GM12878 (cell line): ENCODE measurements at regions of chr22 and their contacts with region 1.

Region 1: DNA sequence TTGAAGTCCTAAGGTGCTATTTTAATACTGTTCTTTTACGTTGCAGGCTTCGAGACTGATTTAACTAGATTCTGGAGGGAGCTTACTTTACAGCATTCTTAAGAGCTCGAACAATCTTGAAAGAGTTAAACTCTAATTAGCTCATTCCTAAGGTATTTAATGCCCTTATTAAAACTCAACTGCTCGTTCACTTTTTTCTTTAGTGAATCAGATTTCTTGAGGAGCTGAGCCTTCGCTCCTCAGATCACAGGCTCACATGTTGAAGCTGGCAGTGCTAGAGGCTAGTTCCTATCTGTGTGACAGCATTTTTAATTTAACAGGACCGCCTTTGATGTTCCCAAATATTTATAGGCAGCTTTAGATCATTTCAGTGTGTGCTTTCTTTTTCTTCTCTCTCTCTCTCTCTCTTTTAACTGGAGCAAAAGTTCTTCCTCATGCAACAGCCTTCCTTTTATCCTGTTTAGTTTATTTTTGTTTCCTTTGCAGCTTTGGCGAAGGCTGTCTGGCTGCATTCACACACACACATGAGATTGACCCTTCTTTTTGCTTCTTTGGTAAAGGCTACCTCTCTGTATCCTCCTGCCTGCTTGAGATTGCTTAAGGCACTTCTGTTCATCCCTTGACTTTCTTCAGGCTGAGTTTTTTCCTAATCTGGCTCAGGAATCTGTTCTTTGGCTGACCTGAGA is 21.0 kb downstream of the ZNRF3 start:
- DNase-seq: no peak
- ATAC-seq: no peak
- H3K4me3 ChIP-seq: no peak overlapping the region
- H3K27ac ChIP-seq: no peak overlapping the region
- H3K4me1 ChIP-seq: peaks cover 23% of the 10 kb centered on the region
- H3K27me3 ChIP-seq: no peaks in the 10 kb centered on the region; a peak in 1 of 4 replicates
- CTCF ChIP-seq: no peak
- EP300 ChIP-seq: no peak
- POLR2A ChIP-seq: no peak
- RAD21 ChIP-seq: no peak

Region 2: DNA sequence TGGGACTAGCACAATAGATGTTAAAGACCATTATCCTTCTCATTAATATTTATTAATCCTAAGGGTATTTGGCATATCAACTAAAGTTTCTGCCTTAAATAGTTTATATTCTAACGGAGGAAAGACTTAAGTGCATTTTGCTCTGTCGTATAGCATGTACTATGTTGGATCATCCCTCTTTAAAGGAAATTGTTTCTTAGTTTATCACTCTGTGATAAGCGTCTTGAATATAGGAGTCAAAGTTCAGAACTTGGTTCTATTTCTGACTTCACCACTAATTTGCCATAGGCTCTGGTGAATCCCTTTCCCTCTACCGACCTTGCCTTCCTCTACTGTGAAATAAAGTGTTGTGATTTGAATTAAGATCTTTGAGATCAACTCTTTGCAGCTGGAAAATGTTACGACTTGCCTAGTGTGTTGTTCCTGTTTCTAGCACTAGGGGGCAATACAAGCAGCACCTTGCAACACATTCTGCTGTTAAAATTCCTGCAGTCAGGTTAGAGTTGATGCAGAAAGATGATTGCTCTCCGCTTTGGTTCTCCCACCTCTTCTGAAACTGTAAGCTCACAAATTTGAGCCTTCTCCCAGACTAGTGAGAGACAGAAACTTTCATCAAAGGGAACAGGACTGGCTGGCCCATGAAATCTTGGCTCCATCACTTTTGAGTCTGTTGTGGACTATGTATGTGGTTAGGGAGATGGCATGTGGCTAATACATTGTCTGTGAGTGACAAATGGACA is 48.8 kb before region 1 on chr22:
- CTCF ChIA-PET with region 1: interaction called, 12 read pairs
- POLR2A ChIA-PET with region 1: no interaction called
- RAD21 ChIA-PET with region 1: interaction called, 3 read pairs
- SMC1A ChIA-PET with region 1: interaction called, 7 read pairs
- in situ Hi-C with region 1: no loop called
- intact Hi-C with region 1: loop called (anchors 5 kb)
- DNase-seq: peak; percentile 27
- ATAC-seq: peak; percentile 79
- H3K4me3 ChIP-seq: no peak overlapping the region
- H3K27ac ChIP-seq: no peak overlapping the region
- H3K4me1 ChIP-seq: no peaks in the 10 kb centered on the region
- H3K27me3 ChIP-seq: no peaks in the 10 kb centered on the region; a peak in 1 of 4 replicates
- CTCF ChIP-seq: peak; percentile 85 to 90 (median 87); a peak in 5 of 6 replicates
- EP300 ChIP-seq: no peak
- POLR2A ChIP-seq: no peak
- RAD21 ChIP-seq: peak; percentile 94

Region 3: DNA sequence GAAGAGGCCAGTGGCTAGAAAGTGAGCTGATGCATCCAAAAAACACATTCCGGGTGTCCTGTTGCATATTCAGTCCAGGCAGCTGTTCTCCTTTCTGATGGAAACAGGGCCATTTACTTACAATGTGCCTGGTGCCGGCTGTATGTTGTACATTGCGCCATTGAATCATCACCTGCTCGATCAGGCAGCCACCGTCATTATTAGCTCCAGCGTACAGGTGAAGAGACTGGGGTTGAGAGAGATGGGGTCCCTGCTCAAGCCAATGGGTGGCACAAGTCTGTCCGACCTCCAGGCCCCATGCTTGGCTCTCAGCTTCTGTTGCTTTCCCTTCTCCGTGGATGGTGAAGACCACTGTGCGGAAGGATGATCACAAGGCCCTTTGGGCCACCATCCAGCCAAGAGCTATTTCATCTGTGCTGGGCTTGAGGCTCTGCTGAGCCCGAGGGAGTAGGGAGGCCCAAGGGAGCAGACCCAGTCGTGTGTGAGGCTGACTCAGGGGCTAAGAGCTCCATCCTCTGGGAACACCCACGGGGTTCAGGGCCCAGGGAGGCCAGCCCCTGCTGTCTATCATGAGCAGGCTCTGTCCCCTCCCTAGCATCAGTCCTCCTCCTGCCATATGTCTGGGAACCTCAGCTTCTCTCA is 280.6 kb after region 1 on chr22:
- CTCF ChIA-PET with region 1: no interaction called
- POLR2A ChIA-PET with region 1: no interaction called
- RAD21 ChIA-PET with region 1: no interaction called
- SMC1A ChIA-PET with region 1: no interaction called
- in situ Hi-C with region 1: no loop called
- intact Hi-C with region 1: no loop called
- DNase-seq: no peak
- ATAC-seq: no peak
- H3K4me3 ChIP-seq: no peak overlapping the region
- H3K27ac ChIP-seq: no peak overlapping the region
- H3K4me1 ChIP-seq: no peaks in the 10 kb centered on the region
- H3K27me3 ChIP-seq: no peaks in the 10 kb centered on the region
- CTCF ChIP-seq: no peak
- EP300 ChIP-seq: no peak
- POLR2A ChIP-seq: no peak
- RAD21 ChIP-seq: no peak